ENCODE measurements at regions of chr15 and their contacts with region 1.

Region 1: GRCh38 chr15:72155635-72156616 is 37.7 kb downstream of the SENP8 start:
- DNase-seq: no peak
- H3K4me3 ChIP-seq: peak overlapping the region; percentile 32 to 74 (median 56)
- H3K27ac ChIP-seq: peak overlapping the region; percentile 55 to 85 (median 84)
- H3K4me1 ChIP-seq: peaks cover 0 to 30% (median 13%) of the 10 kb centered on the region in 3 donors
- H3K27me3 ChIP-seq: no peaks in the 10 kb centered on the region
- CTCF ChIP-seq: peak; percentile 79 to 91 (median 83)
- POLR2A ChIP-seq: no peak

Region 2: GRCh38 chr15:71800835-71801745 is 354.8 kb before region 1 on chr15:
- intact Hi-C with region 1: loop called (anchors 10 kb)
- DNase-seq: no peak
- H3K4me3 ChIP-seq: no peak overlapping the region
- H3K27ac ChIP-seq: no peak overlapping the region
- H3K4me1 ChIP-seq: peaks cover 0 to 15% (median 0%) of the 10 kb centered on the region in 3 donors
- H3K27me3 ChIP-seq: no peaks in the 10 kb centered on the region
- CTCF ChIP-seq: peak; percentile 36 to 92 (median 84)
- POLR2A ChIP-seq: no peak